ENCODE measurements at regions of chr14 and their contacts with region 1.

Region 1: GRCh38 chr14:55446218-55446654 is 5.8 kb upstream of the TBPL2 start:
- DNase-seq: peak; percentile 80
- H3K4me3 ChIP-seq: no peak overlapping the region
- H3K27ac ChIP-seq: no peak overlapping the region
- H3K4me1 ChIP-seq: peaks cover 5% of the 10 kb centered on the region
- H3K27me3 ChIP-seq: no peaks in the 10 kb centered on the region
- CTCF ChIP-seq: peak; percentile 46

Region 2: DNA sequence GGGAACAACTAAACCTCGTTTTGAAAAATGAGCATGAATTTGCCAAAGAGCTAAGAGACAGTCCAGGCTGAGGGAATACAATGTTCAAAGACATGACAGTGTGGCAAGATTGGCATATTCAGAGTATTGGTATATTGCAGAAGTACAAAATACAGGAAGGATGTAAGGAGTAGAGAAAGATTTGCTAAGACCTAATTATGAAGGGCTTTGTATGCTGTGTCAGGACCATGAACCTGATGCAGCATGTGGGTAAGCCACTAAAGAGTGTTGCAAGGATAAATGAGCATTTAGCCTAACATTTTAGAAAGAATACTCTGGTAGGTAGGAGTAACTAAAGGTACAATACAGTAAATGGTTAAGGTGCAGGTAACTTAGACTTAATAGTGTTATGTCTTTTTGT is 198.9 kb after region 1 on chr14:
- intact Hi-C with region 1: no loop called
- DNase-seq: no peak
- H3K4me3 ChIP-seq: no peak overlapping the region
- H3K27ac ChIP-seq: no peak overlapping the region
- H3K4me1 ChIP-seq: no peaks in the 10 kb centered on the region
- H3K27me3 ChIP-seq: no peaks in the 10 kb centered on the region
- CTCF ChIP-seq: no peak

Region 3: GRCh38 chr14:55699131-55700057 is 253.2 kb after region 1 on chr14:
- intact Hi-C with region 1: loop called (anchors 10 kb)
- DNase-seq: no peak
- H3K4me3 ChIP-seq: no peak overlapping the region
- H3K27ac ChIP-seq: no peak overlapping the region
- H3K4me1 ChIP-seq: no peaks in the 10 kb centered on the region
- H3K27me3 ChIP-seq: no peaks in the 10 kb centered on the region
- CTCF ChIP-seq: no peak

Region 4: GRCh38 chr14:56474419-56475022 is 1028.3 kb after region 1 on chr14:
- intact Hi-C with region 1: loop called (anchors 10 kb)
- DNase-seq: no peak
- H3K4me3 ChIP-seq: no peak overlapping the region
- H3K27ac ChIP-seq: no peak overlapping the region
- H3K4me1 ChIP-seq: no peaks in the 10 kb centered on the region
- H3K27me3 ChIP-seq: no peaks in the 10 kb centered on the region
- CTCF ChIP-seq: peak; percentile 63

Measured in colonic mucosa (tissue), 4 donors.